Activated CD4-positive, alpha-beta memory T cell treated with anti-CD3 and anti-CD28 coated beads for 36 hours (primary cell): ENCODE measurements at regions of chr5 and their contacts with region 1.

Region 1: GRCh38 chr5:6765612-6766525 is 52.6 kb downstream of the TENT4A start:
- DNase-seq: peak; percentile 82
- H3K4me3 Mint-ChIP-seq: no peak overlapping the region
- H3K27ac Mint-ChIP-seq: no peak overlapping the region
- H3K4me1 Mint-ChIP-seq: no peaks in the 10 kb centered on the region
- H3K27me3 Mint-ChIP-seq: peaks cover 2% of the 10 kb centered on the region

Region 2: GRCh38 chr5:6540111-6540827 is 225.6 kb before region 1 on chr5:
- CTCF ChIA-PET with region 1: no interaction called
- POLR2A ChIA-PET with region 1: no interaction called
- intact Hi-C with region 1: no loop called
- DNase-seq: no peak
- H3K4me3 Mint-ChIP-seq: no peak overlapping the region
- H3K27ac Mint-ChIP-seq: no peak overlapping the region
- H3K4me1 Mint-ChIP-seq: no peaks in the 10 kb centered on the region
- H3K27me3 Mint-ChIP-seq: peaks cover 7% of the 10 kb centered on the region

Region 3: GRCh38 chr5:6837519-6838110 is 71.7 kb after region 1 on chr5:
- CTCF ChIA-PET with region 1: interaction called, 5 read pairs
- POLR2A ChIA-PET with region 1: no interaction called
- intact Hi-C with region 1: loop called (anchors 2 kb)
- DNase-seq: peak; percentile 60
- H3K4me3 Mint-ChIP-seq: no peak overlapping the region
- H3K27ac Mint-ChIP-seq: no peak overlapping the region
- H3K4me1 Mint-ChIP-seq: peaks cover 3% of the 10 kb centered on the region
- H3K27me3 Mint-ChIP-seq: peaks cover 10% of the 10 kb centered on the region

Region 4: GRCh38 chr5:7117961-7118360 is 352.1 kb after region 1 on chr5:
- CTCF ChIA-PET with region 1: no interaction called
- POLR2A ChIA-PET with region 1: no interaction called
- intact Hi-C with region 1: no loop called
- DNase-seq: no peak
- H3K4me3 Mint-ChIP-seq: no peak overlapping the region
- H3K27ac Mint-ChIP-seq: no peak overlapping the region
- H3K4me1 Mint-ChIP-seq: no peaks in the 10 kb centered on the region
- H3K27me3 Mint-ChIP-seq: no peaks in the 10 kb centered on the region

Region 5: GRCh38 chr5:7745882-7746610 is 980.2 kb after region 1 on chr5:
- CTCF ChIA-PET with region 1: interaction called, 3 read pairs
- POLR2A ChIA-PET with region 1: no interaction called
- intact Hi-C with region 1: loop called (anchors 10 kb)
- DNase-seq: peak; percentile 53
- H3K4me3 Mint-ChIP-seq: no peak overlapping the region
- H3K27ac Mint-ChIP-seq: no peak overlapping the region
- H3K4me1 Mint-ChIP-seq: no peaks in the 10 kb centered on the region
- H3K27me3 Mint-ChIP-seq: peaks cover 8% of the 10 kb centered on the region